ENCODE measurements at regions of chr2 and their contacts with region 1.

Region 1: GRCh38 chr2:160505256-160505655 is 11.6 kb upstream of the RBMS1 start:
- DNase-seq: peak; percentile 43
- H3K4me3 Mint-ChIP-seq: no peak overlapping the region
- H3K27ac Mint-ChIP-seq: no peak overlapping the region
- H3K4me1 Mint-ChIP-seq: peaks cover 12% of the 10 kb centered on the region
- H3K27me3 Mint-ChIP-seq: no peaks in the 10 kb centered on the region

Region 2: GRCh38 chr2:160411167-160411566 is 94.1 kb before region 1 on chr2:
- intact Hi-C with region 1: no loop called
- DNase-seq: peak; percentile 78
- H3K4me3 Mint-ChIP-seq: peak overlapping the region; percentile 77
- H3K27ac Mint-ChIP-seq: peak overlapping the region; percentile 94
- H3K4me1 Mint-ChIP-seq: peaks cover 53% of the 10 kb centered on the region
- H3K27me3 Mint-ChIP-seq: peaks cover 4% of the 10 kb centered on the region

Region 3: GRCh38 chr2:160482673-160483072 is 22.6 kb before region 1 on chr2:
- intact Hi-C with region 1: no loop called
- DNase-seq: peak; percentile 83
- H3K4me3 Mint-ChIP-seq: peak overlapping the region; percentile 61
- H3K27ac Mint-ChIP-seq: peak overlapping the region; percentile 81
- H3K4me1 Mint-ChIP-seq: peaks cover 57% of the 10 kb centered on the region
- H3K27me3 Mint-ChIP-seq: no peaks in the 10 kb centered on the region

Region 4: GRCh38 chr2:160584972-160585494 is 79.8 kb after region 1 on chr2:
- intact Hi-C with region 1: loop called (anchors 5 kb)
- DNase-seq: no peak
- H3K4me3 Mint-ChIP-seq: no peak overlapping the region
- H3K27ac Mint-ChIP-seq: no peak overlapping the region
- H3K4me1 Mint-ChIP-seq: peaks cover 2% of the 10 kb centered on the region
- H3K27me3 Mint-ChIP-seq: peaks cover 4% of the 10 kb centered on the region

Measured in activated CD4-positive, alpha-beta T cell treated with anti-CD3 and anti-CD28 coated beads, Interleukin-2, amount 10 ng/mL, durations not matched to agents 24 days and 14 days (primary cell).